GM10248 (cell line): ENCODE measurements at regions of chr1 and their contacts with region 1.

Region 1: DNA sequence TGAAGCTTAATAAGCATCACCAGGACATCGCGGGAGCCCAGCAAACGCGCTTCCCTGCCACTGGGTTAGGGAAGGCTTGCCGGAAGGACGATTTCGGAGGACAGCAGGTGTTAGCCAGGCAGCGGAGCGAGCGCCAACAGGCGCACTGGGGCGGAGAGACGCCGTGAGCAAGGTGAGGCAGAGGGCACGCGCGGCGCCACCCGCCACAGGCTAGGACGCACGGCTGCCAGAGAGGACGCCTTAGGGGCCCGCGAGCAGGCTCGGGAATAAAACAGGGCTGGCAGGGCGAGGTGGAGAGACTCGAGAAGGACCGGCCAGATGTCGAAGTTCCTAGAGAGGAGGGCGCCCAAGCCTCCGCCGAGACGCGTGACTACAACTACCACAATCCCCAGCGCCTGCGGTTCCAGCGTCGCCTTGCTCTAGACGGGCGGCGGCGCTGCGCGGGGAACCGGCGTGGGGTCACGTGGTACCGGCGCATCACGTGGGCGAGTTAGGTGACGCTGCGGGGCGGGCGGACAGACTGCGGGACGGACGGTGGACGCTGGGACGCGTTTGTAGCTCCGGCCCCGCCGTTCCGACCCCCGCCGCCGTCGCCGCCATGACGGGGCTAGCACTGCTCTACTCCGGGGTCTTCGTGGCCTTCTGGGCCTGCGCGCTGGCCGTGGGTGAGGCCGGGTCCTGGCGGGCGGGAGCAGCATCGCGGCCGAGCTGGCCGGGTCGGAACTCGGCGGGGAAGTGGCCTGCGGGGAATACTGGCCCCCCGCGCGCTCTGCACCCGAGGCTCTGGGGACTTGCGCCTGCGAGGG is at the start of gene ATP6V0B:
- DNase-seq: peak; percentile 97
- CTCF ChIP-seq: peak; percentile 20

Region 2: GRCh38 chr1:43082740-43083139 is 891.9 kb before region 1 on chr1:
- CTCF ChIA-PET with region 1: no interaction called
- POLR2A ChIA-PET with region 1: interaction called, 11 read pairs
- DNase-seq: no peak
- CTCF ChIP-seq: no peak

Region 3: GRCh38 chr1:44084998-44085675 is 110.5 kb after region 1 on chr1:
- CTCF ChIA-PET with region 1: no interaction called
- POLR2A ChIA-PET with region 1: no interaction called
- DNase-seq: no peak
- CTCF ChIP-seq: no peak